ENCODE measurements at regions of chr14 and their contacts with region 1.

Region 1: GRCh38 chr14:74362361-74362915 is 14.2 kb downstream of the VRTN start:
- DNase-seq: peak; percentile 75
- H3K4me3 ChIP-seq: no peak overlapping the region
- H3K27ac ChIP-seq: no peak overlapping the region
- H3K4me1 ChIP-seq: no peaks in the 10 kb centered on the region
- H3K27me3 ChIP-seq: no peaks in the 10 kb centered on the region
- CTCF ChIP-seq: peak; percentile 88

Region 2: DNA sequence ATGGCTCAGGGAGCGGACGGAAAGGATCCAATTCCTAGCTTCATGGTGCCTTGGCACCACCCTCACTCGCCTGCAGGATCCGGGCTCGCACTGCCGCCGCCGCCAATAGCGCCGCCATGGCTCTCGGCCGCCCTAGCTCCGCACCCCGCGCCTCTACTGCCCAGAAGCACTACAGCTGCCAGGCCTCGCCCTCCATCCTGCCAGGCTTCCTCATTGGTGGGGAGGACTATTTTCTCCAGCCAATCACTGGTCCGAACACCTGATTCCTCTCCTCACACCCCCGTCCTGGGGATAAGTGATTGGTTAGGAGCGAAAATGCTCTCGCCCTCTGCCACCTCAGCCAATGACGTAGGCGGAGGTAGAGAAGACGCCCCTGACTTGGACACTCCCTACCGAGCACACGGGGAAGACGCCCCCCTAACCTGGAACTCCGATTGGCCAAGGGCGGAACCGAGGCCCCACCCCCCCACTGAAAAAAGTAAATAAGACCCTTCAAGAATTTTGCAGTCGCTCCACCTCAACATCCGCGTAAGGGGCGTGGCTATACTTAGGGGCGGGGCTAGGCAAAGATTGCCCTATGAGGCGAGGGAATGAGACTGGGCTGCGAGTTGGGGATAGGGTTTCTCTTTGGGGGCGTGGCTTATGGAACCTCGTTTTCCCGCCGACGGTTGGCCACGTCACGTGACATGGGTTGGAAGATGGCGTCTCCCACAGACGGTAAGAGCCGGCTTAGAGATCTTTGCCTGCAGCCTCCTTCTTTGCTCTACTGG is 278.0 kb before region 1 on chr14 and contains the starts of genes ALDH6A1 and LIN52:
- intact Hi-C with region 1: no loop called
- DNase-seq: peak; percentile 100
- H3K4me3 ChIP-seq: peak within 1 kb of the TSS; percentile 74
- H3K27ac ChIP-seq: peak within 1 kb of the TSS; percentile 54
- H3K4me1 ChIP-seq: peaks cover 10% of the 10 kb centered on the region
- H3K27me3 ChIP-seq: no peaks in the 10 kb centered on the region
- CTCF ChIP-seq: no peak
- total RNA-seq, gene ALDH6A1: 29.6 to 47.9 TPM
- total RNA-seq, gene LIN52: 3.5 to 7.5 TPM

Region 3: GRCh38 chr14:74478996-74479635 is 116.7 kb after region 1 on chr14:
- intact Hi-C with region 1: loop called (anchors 2 kb)
- DNase-seq: no peak
- H3K4me3 ChIP-seq: no peak overlapping the region
- H3K27ac ChIP-seq: no peak overlapping the region
- H3K4me1 ChIP-seq: no peaks in the 10 kb centered on the region
- H3K27me3 ChIP-seq: no peaks in the 10 kb centered on the region
- CTCF ChIP-seq: no peak

Region 4: DNA sequence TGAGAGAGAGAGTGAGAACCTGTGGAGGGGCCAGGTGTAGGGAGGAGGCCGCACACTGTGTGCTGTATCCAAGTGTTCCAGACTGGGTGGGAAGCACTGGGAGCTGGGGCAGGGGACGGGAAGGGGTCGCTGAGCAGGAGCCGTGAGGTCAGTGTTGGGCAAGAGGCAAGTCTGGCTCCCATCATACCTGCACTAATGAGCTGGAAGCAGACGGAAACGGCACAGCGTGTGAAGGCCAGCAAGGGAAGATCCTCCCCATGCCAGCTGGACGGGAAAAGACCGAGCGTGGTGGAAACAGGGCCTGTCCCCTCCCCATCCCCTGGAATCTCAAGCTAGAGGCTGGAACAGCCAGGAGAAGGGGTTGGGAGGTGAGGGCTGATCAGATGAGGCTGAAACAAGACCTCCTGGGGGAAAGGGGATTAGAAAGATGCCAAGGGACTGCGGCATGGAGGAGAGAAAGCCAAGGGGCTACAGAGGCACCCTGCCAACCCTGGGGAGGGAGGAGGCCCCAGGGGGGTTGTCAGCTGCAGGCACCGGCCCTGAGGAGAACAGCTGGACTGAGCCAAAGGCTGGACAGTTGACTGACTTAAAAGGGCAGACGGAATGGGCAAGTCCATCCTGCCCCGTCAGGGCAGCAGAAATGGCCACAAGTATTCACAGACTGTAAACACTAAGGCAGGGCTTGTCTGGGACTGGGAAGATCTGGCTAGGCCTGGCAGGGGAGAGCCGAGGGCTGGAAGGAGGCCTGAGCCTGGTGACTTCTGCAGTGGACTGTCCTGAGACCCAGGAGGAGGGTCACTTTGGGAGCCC is 268.6 kb after region 1 on chr14:
- intact Hi-C with region 1: no loop called
- DNase-seq: no peak
- H3K4me3 ChIP-seq: no peak overlapping the region
- H3K27ac ChIP-seq: no peak overlapping the region
- H3K4me1 ChIP-seq: no peaks in the 10 kb centered on the region
- H3K27me3 ChIP-seq: no peaks in the 10 kb centered on the region
- CTCF ChIP-seq: no peak

Region 5: DNA sequence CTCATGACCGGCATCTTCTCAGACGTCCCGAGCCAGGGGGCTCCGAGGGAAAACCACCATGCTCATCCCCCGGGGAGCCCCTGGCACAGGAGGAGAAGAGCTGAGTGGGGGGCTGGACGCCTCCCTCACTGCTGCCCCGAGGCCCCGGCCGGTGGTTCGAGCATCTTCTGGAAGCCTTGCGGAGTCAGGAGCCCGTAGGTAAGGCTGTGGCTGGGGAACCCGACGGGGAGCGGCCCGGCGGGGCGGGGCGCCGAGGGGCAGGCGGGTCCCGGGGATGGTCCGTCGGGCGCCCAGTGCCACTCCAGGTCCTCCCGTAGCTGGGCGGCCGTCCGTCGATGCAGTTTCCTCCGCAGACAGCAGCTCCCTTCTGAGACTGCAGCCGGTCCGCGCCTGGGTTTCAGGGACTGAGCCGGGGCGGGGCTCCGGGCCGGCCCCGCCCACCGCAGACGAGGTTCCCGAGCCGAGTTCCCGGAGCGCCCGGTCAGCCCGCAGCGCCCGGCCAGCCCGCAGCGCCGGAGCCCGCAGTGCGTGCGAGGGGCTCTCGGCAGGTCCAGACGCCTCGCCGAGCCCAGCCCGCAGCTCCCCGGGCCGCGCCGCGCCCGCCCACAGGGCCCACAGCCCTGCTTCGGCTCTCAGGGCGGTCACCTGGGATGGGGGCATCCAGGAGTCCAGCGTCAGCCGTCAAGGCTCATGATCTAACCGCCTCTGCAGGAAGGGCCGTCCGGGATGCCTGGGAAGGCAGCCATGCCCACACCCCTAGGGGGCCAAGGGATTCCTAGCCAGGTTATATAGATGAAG is 593.0 kb after region 1 on chr14 and contains the start of gene PGF:
- intact Hi-C with region 1: no loop called
- DNase-seq: peak; percentile 78
- H3K4me3 ChIP-seq: peak within 1 kb of the TSS; percentile 54
- H3K27ac ChIP-seq: no peak within 1 kb of the TSS
- H3K4me1 ChIP-seq: peaks cover 12% of the 10 kb centered on the region
- H3K27me3 ChIP-seq: no peaks in the 10 kb centered on the region
- CTCF ChIP-seq: no peak
- total RNA-seq, gene PGF: 0.57 to 2.2 TPM